ENCODE measurements at regions of chr2 and their contacts with region 1.

Region 1: DNA sequence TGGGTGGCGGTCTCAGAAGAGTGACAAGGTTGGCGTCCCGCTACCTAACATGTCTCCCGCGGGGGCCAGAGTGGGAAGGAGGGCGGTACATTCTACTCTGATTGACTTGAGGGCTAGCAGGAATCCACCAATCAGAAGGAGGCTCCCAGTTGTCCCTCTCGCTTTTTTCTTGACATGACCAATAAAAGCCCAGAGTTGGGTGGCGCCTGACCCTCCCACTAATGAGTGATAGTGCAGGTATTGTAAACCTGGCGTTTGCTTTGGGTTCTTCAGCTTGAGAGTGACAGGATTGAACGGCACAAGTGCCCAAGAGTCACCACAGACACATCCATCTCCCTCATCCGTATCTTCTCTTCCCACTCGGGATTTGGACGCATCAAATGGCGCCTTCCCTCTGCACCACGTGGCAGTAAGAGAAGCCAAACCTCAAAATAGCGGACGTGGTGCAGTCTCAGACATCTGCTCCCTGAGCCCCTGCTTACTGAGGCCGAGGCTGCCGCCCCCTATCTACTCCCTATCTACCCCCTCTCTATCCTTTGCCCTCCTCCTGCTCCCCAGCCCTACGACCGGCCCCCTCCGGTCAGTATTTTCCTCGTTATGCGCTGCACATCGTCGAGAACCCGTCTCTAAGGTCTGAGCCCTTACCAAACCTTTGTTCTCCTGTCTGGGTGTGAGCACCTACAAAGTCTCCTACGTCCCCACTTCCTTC is 768 bp upstream of the FAM161A start:
- H3K4me3 Mint-ChIP-seq: peak overlapping the region; percentile 100
- H3K27ac Mint-ChIP-seq: peak overlapping the region; percentile 89
- H3K4me1 Mint-ChIP-seq: peaks cover 15% of the 10 kb centered on the region
- H3K27me3 Mint-ChIP-seq: peaks cover 5% of the 10 kb centered on the region

Region 2: DNA sequence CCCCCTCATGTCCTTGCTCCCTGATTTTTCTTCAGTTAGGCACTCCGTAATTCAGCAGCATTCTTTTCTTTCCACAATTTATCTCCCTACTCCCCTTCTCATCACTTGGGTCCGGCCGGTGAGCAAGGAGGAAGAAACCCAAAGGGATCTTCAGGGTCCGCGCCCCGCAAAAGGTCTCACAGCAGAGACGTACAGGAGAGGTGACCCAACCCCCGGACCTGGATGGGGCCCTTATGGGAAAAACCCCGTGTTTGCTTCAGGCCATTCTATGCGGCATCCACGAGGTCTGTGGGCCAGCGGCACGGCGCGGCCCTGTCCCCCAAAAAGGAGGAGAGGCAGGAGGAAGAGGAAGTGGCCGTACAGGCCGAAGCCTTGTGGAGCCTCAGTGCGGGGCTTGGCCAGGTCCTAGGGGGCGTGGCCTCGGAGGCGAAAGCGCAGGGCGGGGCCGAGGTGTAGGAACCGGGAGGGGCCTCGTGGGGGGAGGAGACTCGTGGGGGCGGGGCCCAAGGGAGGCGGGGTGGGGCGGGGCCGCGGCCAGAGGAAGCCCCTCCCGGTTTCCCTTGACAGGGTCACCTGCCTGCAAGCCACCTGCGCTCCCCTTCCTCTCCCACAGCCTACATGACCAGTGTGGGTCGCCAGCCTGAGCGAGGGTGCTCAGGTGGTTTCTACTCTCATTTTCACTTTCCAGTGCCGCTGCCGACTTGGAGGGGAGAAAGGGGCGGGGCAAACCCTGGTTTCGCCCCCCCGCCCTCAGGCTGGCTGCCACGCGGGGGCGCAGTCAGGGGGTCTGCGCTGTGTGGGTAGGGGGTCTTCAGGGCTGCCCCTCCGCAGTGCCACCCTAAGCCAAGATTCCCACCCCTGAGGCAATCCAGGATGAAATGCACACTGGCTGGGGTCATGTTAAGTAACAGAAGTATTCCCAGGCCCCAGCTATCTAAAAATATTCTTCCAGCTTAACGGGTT is 160.0 kb before region 1 on chr2:
- intact Hi-C with region 1: loop called (anchors 10 kb)
- H3K4me3 Mint-ChIP-seq: peak overlapping the region; percentile 96
- H3K27ac Mint-ChIP-seq: peak overlapping the region; percentile 97
- H3K4me1 Mint-ChIP-seq: peaks cover 11% of the 10 kb centered on the region
- H3K27me3 Mint-ChIP-seq: peaks cover 3% of the 10 kb centered on the region

Region 3: DNA sequence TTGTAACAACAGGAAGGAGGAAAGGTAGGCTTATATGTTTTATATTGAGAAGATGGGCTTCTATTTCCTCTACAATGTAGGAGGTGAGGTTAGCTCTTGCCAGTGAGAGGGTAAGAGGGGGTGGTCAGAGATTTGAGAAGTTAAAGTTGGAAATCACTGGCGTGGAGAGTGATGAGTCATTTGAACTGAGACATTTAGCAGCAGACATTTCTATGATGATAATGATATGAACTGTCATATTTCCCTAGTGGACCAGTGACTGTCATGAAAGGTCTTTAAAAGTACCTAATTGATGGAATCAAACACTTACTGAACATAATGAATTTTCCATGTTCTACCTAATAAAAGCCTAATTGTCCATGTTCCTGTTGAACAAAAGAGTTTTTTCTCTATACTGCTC is 126.9 kb before region 1 on chr2:
- intact Hi-C with region 1: no loop called
- H3K4me3 Mint-ChIP-seq: no peak overlapping the region
- H3K27ac Mint-ChIP-seq: no peak overlapping the region
- H3K4me1 Mint-ChIP-seq: peaks cover 5% of the 10 kb centered on the region
- H3K27me3 Mint-ChIP-seq: no peaks in the 10 kb centered on the region

Region 4: GRCh38 chr2:61888267-61889055 is 33.8 kb after region 1 on chr2 and contains the start of gene CCT4:
- intact Hi-C with region 1: loop called (anchors 2 kb)
- H3K4me3 Mint-ChIP-seq: peak within 1 kb of the TSS; percentile 94
- H3K27ac Mint-ChIP-seq: peak within 1 kb of the TSS; percentile 97
- H3K4me1 Mint-ChIP-seq: peaks cover 19% of the 10 kb centered on the region
- H3K27me3 Mint-ChIP-seq: no peaks in the 10 kb centered on the region

Measured in dendritic cell treated with granulocyte-macrophage colony-stimulating factor and Interleukin-4, amounts not matched to agents 40 ng/mL and 50 ng/mL, for 4 days (primary cell).